Activated CD4-positive, alpha-beta memory T cell treated with anti-CD3 and anti-CD28 coated beads for 36 hours (primary cell): ENCODE measurements at regions of chr15 and their contacts with region 1.

Region 1: DNA sequence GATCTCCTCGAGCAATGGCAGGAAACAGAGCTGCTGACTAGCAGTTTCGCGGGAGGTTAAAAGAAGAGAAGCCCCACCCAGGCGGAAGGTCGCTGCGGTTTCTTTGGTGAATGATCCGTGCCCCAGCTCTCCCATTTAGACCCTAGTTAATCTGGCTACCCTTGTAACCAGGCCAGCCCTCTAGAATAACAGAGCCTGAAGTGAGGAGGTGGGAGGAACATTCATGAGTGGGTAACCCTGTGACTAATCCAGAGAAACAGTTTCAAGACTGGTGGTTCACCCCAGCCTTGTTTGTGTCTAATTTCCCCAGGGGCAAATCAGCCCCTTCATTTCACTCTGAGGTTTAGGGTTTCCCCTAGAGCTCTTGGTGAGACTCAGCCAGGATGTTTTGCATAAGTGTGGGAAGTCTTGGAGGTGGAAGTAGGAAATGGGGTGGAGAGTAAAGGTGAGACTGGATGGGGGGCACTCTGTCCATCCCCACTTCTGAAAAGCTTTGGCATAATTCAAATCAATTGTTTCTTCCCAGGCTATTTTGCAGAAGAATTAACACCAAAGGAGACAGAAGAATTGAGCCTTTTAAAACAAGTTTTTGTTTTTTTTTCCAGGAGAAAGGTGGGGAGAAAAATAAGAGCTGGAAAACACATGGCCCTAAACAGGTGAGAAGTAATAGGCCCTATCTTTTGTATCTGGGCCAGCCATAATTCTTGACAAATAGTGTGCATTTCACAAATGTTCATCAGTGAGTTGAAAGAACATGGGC is 303.1 kb downstream of the RPLP1 start:
- DNase-seq: peak; percentile 92
- H3K4me3 Mint-ChIP-seq: peak overlapping the region; percentile 52
- H3K27ac Mint-ChIP-seq: peak overlapping the region; percentile 80
- H3K4me1 Mint-ChIP-seq: peaks cover 95% of the 10 kb centered on the region
- H3K27me3 Mint-ChIP-seq: peaks cover 11% of the 10 kb centered on the region

Region 2: GRCh38 chr15:69576035-69576526 is 179.7 kb before region 1 on chr15:
- CTCF ChIA-PET with region 1: no interaction called
- POLR2A ChIA-PET with region 1: interaction called, 4 read pairs
- intact Hi-C with region 1: loop called (anchors 1 kb)
- DNase-seq: peak; percentile 82
- H3K4me3 Mint-ChIP-seq: no peak overlapping the region
- H3K27ac Mint-ChIP-seq: no peak overlapping the region
- H3K4me1 Mint-ChIP-seq: peaks cover 37% of the 10 kb centered on the region
- H3K27me3 Mint-ChIP-seq: no peaks in the 10 kb centered on the region

Region 3: DNA sequence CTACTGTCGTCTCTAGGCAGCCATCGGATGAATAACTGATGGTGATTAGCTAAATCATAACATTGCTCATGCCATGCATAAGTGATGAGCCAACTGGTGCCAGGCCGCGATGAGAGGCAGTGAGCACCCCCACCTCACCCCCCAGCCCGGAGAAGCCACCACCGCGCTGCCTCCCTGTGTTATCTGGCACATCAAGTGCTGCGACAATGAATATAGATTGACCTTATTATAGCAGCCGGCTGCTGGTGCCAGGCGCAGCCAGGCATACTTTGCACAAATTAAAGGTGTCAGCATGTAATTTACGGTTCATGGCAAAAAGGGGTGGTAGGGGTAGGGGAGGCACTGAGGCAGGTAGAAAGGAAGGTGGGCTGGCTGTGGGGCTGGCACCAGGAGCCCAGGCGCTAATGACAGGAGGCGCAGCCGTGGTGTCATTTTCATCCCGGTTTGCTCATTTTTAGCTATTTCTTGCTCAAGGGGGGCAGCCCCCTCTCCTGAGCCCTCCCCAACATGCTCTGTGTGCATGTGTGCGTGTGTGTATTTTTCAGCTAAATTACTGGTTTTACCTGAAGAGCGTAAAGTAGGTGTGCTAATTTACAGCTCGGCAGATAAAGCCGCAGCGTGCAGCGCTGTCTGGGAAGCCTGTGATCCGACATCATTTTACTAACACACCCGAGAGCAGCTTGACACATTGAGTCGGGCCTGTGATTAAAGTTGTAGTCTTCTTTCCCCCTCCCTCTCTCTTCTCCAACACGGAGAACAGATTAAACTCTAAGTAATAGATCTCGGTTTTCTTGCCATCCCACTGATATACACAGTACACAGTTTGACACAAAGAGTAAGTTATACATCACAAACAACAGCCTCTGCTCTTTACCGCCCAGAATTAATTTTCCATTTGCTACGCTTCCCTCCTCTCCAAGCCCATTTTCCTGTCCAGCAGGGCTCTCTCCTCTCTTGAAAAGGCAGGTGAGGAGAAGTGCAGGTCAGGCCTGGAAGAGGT is 90.9 kb before region 1 on chr15:
- CTCF ChIA-PET with region 1: no interaction called
- POLR2A ChIA-PET with region 1: no interaction called
- intact Hi-C with region 1: no loop called
- DNase-seq: no peak
- H3K4me3 Mint-ChIP-seq: no peak overlapping the region
- H3K27ac Mint-ChIP-seq: no peak overlapping the region
- H3K4me1 Mint-ChIP-seq: peaks cover 26% of the 10 kb centered on the region
- H3K27me3 Mint-ChIP-seq: no peaks in the 10 kb centered on the region

Region 4: GRCh38 chr15:69713726-69714559 is 41.8 kb before region 1 on chr15:
- CTCF ChIA-PET with region 1: interaction called, 4 read pairs
- POLR2A ChIA-PET with region 1: interaction called, 11 read pairs
- intact Hi-C with region 1: loop called (anchors 1 kb)
- DNase-seq: peak; percentile 89
- H3K4me3 Mint-ChIP-seq: peak overlapping the region; percentile 5
- H3K27ac Mint-ChIP-seq: peak overlapping the region; percentile 72
- H3K4me1 Mint-ChIP-seq: peaks cover 61% of the 10 kb centered on the region
- H3K27me3 Mint-ChIP-seq: peaks cover 3% of the 10 kb centered on the region

Region 5: GRCh38 chr15:69951907-69952555 is 196.3 kb after region 1 on chr15:
- CTCF ChIA-PET with region 1: no interaction called
- POLR2A ChIA-PET with region 1: no interaction called
- intact Hi-C with region 1: no loop called
- DNase-seq: no peak
- H3K4me3 Mint-ChIP-seq: no peak overlapping the region
- H3K27ac Mint-ChIP-seq: no peak overlapping the region
- H3K4me1 Mint-ChIP-seq: no peaks in the 10 kb centered on the region
- H3K27me3 Mint-ChIP-seq: no peaks in the 10 kb centered on the region

Region 6: DNA sequence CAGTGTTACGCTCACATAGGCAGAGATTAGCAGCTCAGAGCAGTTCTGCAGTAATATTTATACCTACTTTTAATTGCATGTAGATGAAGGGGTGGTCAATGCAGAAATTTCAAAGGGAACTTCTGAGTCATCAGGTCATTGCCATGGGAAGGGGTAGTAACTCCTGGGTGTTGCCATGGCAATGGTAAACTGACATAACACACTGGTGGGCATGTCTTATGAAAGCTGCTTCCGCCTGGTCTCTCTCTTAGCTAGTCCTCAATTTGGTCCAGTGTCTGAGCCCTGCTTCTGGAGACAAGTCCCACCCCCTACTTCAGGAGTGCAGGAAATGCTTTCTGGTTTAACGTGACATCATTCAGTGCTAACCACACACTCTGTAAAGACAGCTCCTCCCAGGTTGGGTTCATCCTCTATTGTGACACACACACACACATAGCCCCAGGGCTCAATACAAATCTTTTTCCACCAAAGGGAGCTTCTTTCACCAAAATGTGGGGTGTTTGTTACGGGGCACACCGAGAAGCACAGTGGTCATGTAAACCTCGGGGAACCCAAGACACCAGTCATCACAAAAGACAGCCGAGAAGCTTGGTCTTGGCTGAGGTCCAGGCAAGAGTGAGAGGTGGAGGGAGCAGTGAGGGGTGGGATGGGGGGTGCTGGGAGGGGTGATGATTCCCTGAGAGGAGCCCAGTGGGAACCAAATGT is 267.5 kb after region 1 on chr15:
- CTCF ChIA-PET with region 1: no interaction called
- POLR2A ChIA-PET with region 1: interaction called, 5 read pairs
- intact Hi-C with region 1: loop called (anchors 2 kb)
- DNase-seq: peak; percentile 64
- H3K4me3 Mint-ChIP-seq: peak overlapping the region; percentile 24
- H3K27ac Mint-ChIP-seq: peak overlapping the region; percentile 63
- H3K4me1 Mint-ChIP-seq: peaks cover 19% of the 10 kb centered on the region
- H3K27me3 Mint-ChIP-seq: no peaks in the 10 kb centered on the region

Region 7: GRCh38 chr15:70259028-70259424 is 503.3 kb after region 1 on chr15:
- CTCF ChIA-PET with region 1: no interaction called
- POLR2A ChIA-PET with region 1: no interaction called
- intact Hi-C with region 1: loop called (anchors 10 kb)
- DNase-seq: no peak
- H3K4me3 Mint-ChIP-seq: peak overlapping the region; percentile 48
- H3K27ac Mint-ChIP-seq: peak overlapping the region; percentile 63
- H3K4me1 Mint-ChIP-seq: peaks cover 40% of the 10 kb centered on the region
- H3K27me3 Mint-ChIP-seq: peaks cover 1% of the 10 kb centered on the region

Region 8: GRCh38 chr15:70545526-70545925 is 789.8 kb after region 1 on chr15:
- CTCF ChIA-PET with region 1: no interaction called
- POLR2A ChIA-PET with region 1: interaction called, 4 read pairs
- intact Hi-C with region 1: loop called (anchors 5 kb)
- DNase-seq: no peak
- H3K4me3 Mint-ChIP-seq: no peak overlapping the region
- H3K27ac Mint-ChIP-seq: no peak overlapping the region
- H3K4me1 Mint-ChIP-seq: peaks cover 42% of the 10 kb centered on the region
- H3K27me3 Mint-ChIP-seq: no peaks in the 10 kb centered on the region